Posterior cingulate gyrus (tissue), 11 donors: ENCODE measurements at regions of chr1 and their contacts with region 1.

Region 1: DNA sequence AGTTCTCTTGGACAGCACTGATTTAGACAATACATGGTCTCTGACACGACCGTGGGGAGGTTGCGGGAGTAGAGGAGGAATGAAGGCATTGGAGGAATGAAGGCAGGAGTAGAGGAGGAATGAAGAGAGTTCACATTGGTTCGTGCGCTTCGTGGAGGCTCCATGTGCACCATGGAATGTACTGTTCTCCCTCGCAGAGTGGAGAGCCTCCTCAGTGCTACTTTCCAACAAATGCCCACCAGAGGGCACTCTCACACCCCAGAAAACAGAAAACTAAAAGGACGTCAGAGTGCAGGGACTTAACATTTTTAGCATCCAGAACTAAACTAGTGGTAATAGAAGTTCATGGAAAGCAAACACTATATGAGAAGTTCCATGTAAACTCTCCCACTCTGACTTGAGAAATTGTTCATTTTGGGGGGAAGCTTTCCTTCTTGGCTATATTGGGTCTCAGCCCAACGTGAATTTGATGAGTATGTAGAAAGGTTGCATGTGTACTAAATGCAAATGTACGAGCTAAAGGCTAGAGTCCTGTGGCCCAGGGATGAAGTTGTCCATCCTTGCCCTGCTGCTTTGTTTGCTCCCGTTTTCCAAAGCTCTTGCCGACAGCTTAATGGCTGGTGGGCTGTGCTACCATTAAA is 211.6 kb downstream of the LMX1A start:
- DNase-seq: peak in 7 of 10 donors; percentile 41 to 86 (median 64)

Region 2: GRCh38 chr1:163999131-163999530 is 1145.7 kb before region 1 on chr1:
- intact Hi-C with region 1: no loop called
- DNase-seq: no peak

Region 3: DNA sequence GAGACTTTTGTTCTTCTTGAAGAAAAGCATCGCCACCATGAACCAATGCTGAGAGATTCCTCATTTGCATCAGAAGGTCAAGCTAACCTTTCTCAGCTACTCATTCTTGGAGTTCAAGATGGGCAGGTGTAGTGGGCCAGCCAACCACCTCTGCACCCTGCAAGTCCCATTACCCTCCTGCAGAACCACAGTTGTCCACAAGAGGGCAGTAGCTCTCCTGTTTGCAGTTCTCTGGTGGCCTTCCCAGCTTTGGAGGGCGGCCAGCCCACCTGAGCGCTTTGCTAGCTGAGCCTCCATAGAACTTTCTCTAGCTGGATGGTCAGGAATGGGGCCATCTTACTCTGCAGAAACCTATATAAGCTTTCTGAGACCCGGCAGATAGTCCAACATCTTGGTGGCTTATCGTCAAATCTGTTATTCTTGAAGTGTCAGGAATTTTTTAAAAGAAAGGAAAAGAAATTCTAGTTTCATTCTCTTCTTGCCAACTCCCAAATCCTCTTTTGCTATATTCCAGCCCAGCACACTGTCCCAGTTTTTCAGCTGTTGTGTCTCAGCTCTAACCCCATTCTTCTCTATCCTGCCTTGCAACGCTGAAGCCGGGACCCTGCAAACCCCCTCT is 222.6 kb after region 1 on chr1:
- intact Hi-C with region 1: loop called (anchors 5 kb)
- DNase-seq: peak in 7 of 10 donors; percentile 69 to 92 (median 81)

Region 4: GRCh38 chr1:165597883-165598675 is 453.2 kb after region 1 on chr1:
- intact Hi-C with region 1: loop called (anchors 10 kb)
- DNase-seq: peak; percentile 91 to 99 (median 97)